ENCODE measurements at regions of chr3 and their contacts with region 1.

Region 1: DNA sequence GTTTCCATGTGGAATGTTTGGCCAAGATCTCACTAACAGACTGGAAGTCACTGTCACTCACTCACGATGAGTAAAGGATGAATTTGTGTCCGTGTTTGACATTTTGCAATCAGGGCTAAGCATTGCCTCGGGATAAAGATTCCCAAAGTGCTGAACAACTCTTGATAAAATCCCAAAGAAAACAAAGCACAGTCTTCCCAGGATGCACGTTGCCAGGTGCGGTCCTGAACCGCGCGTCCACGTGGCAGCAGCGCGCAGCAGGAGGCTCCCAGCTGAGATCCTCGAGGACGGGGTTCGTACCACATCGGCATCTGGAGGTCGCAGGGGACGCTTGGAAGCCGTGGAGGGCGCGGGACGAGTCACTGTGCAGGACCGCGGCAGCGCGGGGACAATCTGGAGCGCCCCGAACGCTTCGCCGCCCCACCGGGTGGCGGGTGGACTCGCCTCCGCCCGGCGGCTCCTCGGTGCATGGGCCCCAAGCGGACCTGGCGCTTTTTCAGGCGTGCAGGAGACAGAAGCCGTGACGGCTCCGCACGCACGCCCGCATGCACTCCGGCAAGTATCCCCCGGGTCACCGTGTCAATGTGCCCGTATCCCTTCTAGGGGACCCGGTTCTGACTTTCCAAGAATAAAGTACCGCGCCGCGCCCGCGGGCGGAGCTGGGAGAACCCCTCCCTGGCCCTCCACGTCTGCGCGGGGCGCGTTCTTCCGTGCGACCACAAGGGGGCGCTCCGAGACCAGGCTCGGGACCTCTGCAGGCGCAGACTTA is 17.7 kb downstream of the CPN2 start:
- DNase-seq: peak; percentile 79 to 91 (median 86)
- ATAC-seq: peak; percentile 97
- H3K4me3 ChIP-seq: peak overlapping the region; percentile 37
- H3K27ac ChIP-seq: no peak overlapping the region
- H3K4me1 ChIP-seq: peaks cover 3 to 23% of the 10 kb centered on the region in 2 experiments; a peak in 4 of 5 replicates
- H3K27me3 ChIP-seq: peaks cover 22 to 65% of the 10 kb centered on the region in 2 experiments
- CTCF ChIP-seq: peak; percentile 96
- EP300 ChIP-seq: no peak
- POLR2A ChIP-seq: no peak
- RAD21 ChIP-seq: peak; percentile 97 to 98

Region 2: GRCh38 chr3:194404365-194405140 is 71.2 kb after region 1 on chr3:
- CTCF ChIA-PET with region 1: interaction called, 19 read pairs
- POLR2A ChIA-PET with region 1: interaction called, 3 read pairs
- in situ Hi-C with region 1: loop called (anchors 5 kb)
- intact Hi-C with region 1: loop called (anchors 1 kb)
- DNase-seq: peak in 1 of 4 experiments; percentile 73
- ATAC-seq: 0 out of 3 replicates have a peak, but pooled peaks have one; percentile 33
- H3K4me3 ChIP-seq: no peak overlapping the region
- H3K27ac ChIP-seq: no peak overlapping the region
- H3K4me1 ChIP-seq: no peaks in the 10 kb centered on the region; a peak in 2 of 5 replicates
- H3K27me3 ChIP-seq: no peaks in the 10 kb centered on the region
- CTCF ChIP-seq: peak; percentile 46 to 81 (median 58); a peak in 5 of 6 replicates
- EP300 ChIP-seq: no peak
- POLR2A ChIP-seq: no peak
- RAD21 ChIP-seq: peak; percentile 69 to 79

Region 3: GRCh38 chr3:194583604-194584318 is 250.4 kb after region 1 on chr3:
- CTCF ChIA-PET with region 1: no interaction called
- POLR2A ChIA-PET with region 1: no interaction called
- in situ Hi-C with region 1: loop called (anchors 10 kb)
- intact Hi-C with region 1: no loop called
- DNase-seq: peak; percentile 95 to 98 (median 98)
- ATAC-seq: peak; percentile 93
- H3K4me3 ChIP-seq: peak overlapping the region; percentile 99
- H3K27ac ChIP-seq: peak overlapping the region; percentile 95
- H3K4me1 ChIP-seq: peaks cover 9 to 17% of the 10 kb centered on the region in 2 experiments
- H3K27me3 ChIP-seq: no peaks in the 10 kb centered on the region
- CTCF ChIP-seq: peak in 1 of 3 experiments; percentile 22; a peak in 1 of 6 replicates
- EP300 ChIP-seq: no peak
- POLR2A ChIP-seq: peak; percentile 98
- RAD21 ChIP-seq: 0 out of 4 replicates have a peak, but pooled peaks of 1 of the 2 experiments have one; percentile 2

Region 4: GRCh38 chr3:194632809-194633348 is 299.5 kb after region 1 on chr3:
- CTCF ChIA-PET with region 1: interaction called, 4 read pairs
- POLR2A ChIA-PET with region 1: no interaction called
- in situ Hi-C with region 1: no loop called
- intact Hi-C with region 1: loop called (anchors 2 kb)
- DNase-seq: peak; percentile 58 to 79 (median 68)
- ATAC-seq: peak; percentile 74
- H3K4me3 ChIP-seq: peak overlapping the region; percentile 86
- H3K27ac ChIP-seq: peak overlapping the region; percentile 84
- H3K4me1 ChIP-seq: peaks cover 2 to 18% of the 10 kb centered on the region in 2 experiments; a peak in 3 of 5 replicates
- H3K27me3 ChIP-seq: no peaks in the 10 kb centered on the region; a peak in 1 of 5 replicates
- CTCF ChIP-seq: no peak
- EP300 ChIP-seq: no peak
- POLR2A ChIP-seq: no peak
- RAD21 ChIP-seq: no peak

Region 5: DNA sequence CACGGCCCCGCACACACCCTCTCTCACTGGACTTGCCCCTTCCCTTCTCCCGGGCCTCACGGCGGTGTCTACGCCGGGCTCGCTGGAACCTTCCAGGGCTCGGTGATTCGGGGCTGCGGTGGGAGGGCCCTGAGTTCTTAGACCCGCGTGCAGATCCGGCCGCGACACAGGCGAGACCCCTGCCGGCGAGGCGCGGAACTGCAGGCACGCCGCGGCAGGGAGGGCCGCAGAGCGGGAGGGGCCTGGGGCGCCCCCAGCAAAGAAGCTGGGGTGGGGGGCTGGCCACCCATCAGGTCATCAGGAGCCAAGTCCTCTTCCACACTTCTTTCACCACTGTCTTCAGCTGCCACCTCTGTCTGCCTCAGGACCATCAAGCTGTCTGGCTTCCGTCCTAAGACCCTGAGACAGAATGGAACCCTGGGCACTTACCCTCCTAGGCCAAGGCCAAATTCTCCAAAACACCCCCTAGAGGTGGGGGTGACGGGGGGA is 773.1 kb after region 1 on chr3:
- CTCF ChIA-PET with region 1: no interaction called
- POLR2A ChIA-PET with region 1: no interaction called
- in situ Hi-C with region 1: no loop called
- intact Hi-C with region 1: loop called (anchors 10 kb)
- DNase-seq: peak; percentile 78 to 89 (median 82)
- ATAC-seq: peak; percentile 95
- H3K4me3 ChIP-seq: no peak overlapping the region
- H3K27ac ChIP-seq: no peak overlapping the region
- H3K4me1 ChIP-seq: peaks cover 14 to 15% of the 10 kb centered on the region in 2 experiments
- H3K27me3 ChIP-seq: no peaks in the 10 kb centered on the region
- CTCF ChIP-seq: peak; percentile 85 to 89 (median 88)
- EP300 ChIP-seq: no peak
- POLR2A ChIP-seq: no peak
- RAD21 ChIP-seq: peak; percentile 87 to 90